ENCODE measurements at regions of chr1 and their contacts with region 1.

Region 1: GRCh38 chr1:10530281-10530740 is 55.6 kb downstream of the PEX14 start:
- DNase-seq: peak in 1 of 2 experiments; percentile 68
- H3K4me3 ChIP-seq: no peak overlapping the region
- H3K27ac ChIP-seq: no peak overlapping the region
- H3K4me1 ChIP-seq: peaks cover 25% of the 10 kb centered on the region
- H3K27me3 ChIP-seq: no peaks in the 10 kb centered on the region
- CTCF ChIP-seq: no peak

Region 2: GRCh38 chr1:10032590-10033358 is 497.5 kb before region 1 on chr1 and contains the start of gene UBE4B:
- CTCF ChIA-PET with region 1: no interaction called
- POLR2A ChIA-PET with region 1: no interaction called
- intact Hi-C with region 1: no loop called
- DNase-seq: peak; percentile 84 to 99
- H3K4me3 ChIP-seq: peak within 1 kb of the TSS; percentile 82
- H3K27ac ChIP-seq: peak within 1 kb of the TSS; percentile 83
- H3K4me1 ChIP-seq: no peaks in the 10 kb centered on the region; the same call in 1 of the 2 replicates
- H3K27me3 ChIP-seq: no peaks in the 10 kb centered on the region
- CTCF ChIP-seq: peak; percentile 69
- total RNA-seq, gene UBE4B: 54.3 and 59.1 TPM in 2 replicates

Region 3: DNA sequence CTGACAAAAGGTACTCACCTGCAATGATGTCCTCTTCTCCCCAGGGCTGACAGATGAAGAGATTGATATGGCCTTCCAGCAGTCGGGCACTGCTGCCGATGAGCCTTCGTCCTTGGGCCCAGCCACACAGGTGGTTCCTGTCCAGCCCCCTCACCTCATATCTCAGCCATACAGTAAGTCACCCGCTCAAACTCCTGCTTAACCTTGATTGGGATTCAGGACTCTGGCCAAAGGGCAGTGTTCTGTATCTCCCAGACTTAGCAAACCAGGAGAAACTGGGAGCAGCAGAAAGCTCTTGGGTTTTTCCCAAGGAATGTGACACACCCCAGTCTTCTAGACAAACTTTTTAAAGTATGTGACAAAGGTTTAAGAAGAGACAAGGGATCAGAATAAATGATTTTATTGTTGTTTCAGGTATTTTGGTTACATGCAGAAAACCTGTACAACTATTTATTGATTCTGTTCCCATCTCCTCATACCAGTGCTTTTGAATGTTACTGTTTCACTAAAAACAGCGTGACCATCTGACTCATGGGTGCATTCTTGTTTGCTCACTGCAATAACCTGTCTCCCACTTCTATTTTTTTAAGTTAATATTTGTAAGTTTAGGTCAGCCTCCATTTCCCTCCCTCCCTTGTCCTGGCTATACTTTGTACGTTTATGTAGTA is 69.0 kb after region 1 on chr1:
- CTCF ChIA-PET with region 1: no interaction called
- POLR2A ChIA-PET with region 1: interaction called, 4 read pairs
- intact Hi-C with region 1: loop called (anchors 1 kb)
- DNase-seq: peak; percentile 41 to 86
- H3K4me3 ChIP-seq: 0 out of 2 replicates have a peak overlapping the region, but pooled peaks have one; percentile 18
- H3K27ac ChIP-seq: peak overlapping the region; percentile 92
- H3K4me1 ChIP-seq: peaks cover 24% of the 10 kb centered on the region
- H3K27me3 ChIP-seq: no peaks in the 10 kb centered on the region
- CTCF ChIP-seq: no peak

Region 4: DNA sequence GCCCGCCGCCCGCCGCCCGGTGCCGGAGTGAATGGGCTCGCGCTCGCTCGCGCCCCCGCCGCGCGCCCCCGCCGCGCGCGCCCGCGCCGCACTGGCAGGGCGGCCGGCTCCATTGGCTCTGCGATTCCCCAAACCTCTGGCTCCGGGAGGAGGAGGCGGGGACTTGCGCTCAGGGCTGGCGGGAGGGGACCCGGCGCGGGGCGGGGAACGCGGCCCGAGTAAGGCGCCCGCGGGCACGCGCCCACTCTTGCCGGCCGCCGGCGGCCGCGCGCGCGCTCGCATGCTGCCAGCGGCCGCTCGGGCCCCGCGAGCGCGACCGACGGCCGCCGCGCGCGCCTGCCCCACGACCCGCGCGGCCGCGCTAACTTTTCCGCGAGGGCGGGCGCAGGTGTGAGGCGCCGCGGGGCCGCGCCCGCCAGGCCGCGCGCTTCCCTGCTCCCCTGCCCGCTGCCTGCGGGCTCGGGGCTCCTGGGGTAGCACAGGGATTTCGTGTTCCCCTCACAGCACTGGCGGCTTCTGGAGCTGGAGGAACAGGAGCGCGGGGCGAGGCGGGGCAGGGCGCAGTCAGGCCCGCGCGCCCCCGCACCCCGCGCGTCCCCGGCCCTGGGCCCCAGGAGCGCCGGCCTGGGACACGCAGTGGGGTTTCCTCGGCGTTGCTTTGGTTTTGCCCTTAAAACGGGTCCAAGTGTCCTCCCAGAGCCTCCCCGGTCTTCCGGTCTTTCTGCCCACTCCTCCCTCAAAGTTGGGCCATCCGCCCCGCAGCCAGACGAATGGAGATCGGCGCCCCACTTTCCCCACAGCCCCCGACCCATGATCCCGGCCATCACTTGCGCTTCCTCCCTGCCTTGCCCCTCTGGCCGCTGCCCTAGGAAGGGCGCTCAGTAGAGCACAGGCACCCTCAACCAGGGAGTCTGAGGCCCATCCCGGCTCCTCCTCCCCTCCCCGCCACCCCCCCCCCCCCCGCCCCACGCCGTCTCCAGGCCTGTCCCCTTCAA is 164.6 kb after region 1 on chr1:
- CTCF ChIA-PET with region 1: no interaction called
- POLR2A ChIA-PET with region 1: no interaction called
- intact Hi-C with region 1: loop called (anchors 5 kb)
- DNase-seq: peak; percentile 58 to 89
- H3K4me3 ChIP-seq: peak overlapping the region; percentile 46; the same call in 1 of the 2 replicates
- H3K27ac ChIP-seq: no peak overlapping the region
- H3K4me1 ChIP-seq: peaks cover 32% of the 10 kb centered on the region
- H3K27me3 ChIP-seq: no peaks in the 10 kb centered on the region
- CTCF ChIP-seq: no peak

Region 5: GRCh38 chr1:10803971-10804820 is 273.9 kb after region 1 on chr1:
- CTCF ChIA-PET with region 1: no interaction called
- POLR2A ChIA-PET with region 1: no interaction called
- intact Hi-C with region 1: loop called (anchors 5 kb)
- DNase-seq: peak; percentile 68 to 80
- H3K4me3 ChIP-seq: peak overlapping the region; percentile 50; the same call in 1 of the 2 replicates
- H3K27ac ChIP-seq: peak overlapping the region; percentile 71
- H3K4me1 ChIP-seq: peaks cover 14% of the 10 kb centered on the region
- H3K27me3 ChIP-seq: no peaks in the 10 kb centered on the region
- CTCF ChIP-seq: no peak

Region 6: GRCh38 chr1:11126569-11126968 is 596.3 kb after region 1 on chr1:
- CTCF ChIA-PET with region 1: no interaction called
- POLR2A ChIA-PET with region 1: interaction called, 31 read pairs
- intact Hi-C with region 1: no loop called
- DNase-seq: no peak
- H3K4me3 ChIP-seq: no peak overlapping the region
- H3K27ac ChIP-seq: no peak overlapping the region
- H3K4me1 ChIP-seq: no peaks in the 10 kb centered on the region
- H3K27me3 ChIP-seq: no peaks in the 10 kb centered on the region
- CTCF ChIP-seq: no peak